ENCODE measurements at regions of chr12 and their contacts with region 1.

Region 1: DNA sequence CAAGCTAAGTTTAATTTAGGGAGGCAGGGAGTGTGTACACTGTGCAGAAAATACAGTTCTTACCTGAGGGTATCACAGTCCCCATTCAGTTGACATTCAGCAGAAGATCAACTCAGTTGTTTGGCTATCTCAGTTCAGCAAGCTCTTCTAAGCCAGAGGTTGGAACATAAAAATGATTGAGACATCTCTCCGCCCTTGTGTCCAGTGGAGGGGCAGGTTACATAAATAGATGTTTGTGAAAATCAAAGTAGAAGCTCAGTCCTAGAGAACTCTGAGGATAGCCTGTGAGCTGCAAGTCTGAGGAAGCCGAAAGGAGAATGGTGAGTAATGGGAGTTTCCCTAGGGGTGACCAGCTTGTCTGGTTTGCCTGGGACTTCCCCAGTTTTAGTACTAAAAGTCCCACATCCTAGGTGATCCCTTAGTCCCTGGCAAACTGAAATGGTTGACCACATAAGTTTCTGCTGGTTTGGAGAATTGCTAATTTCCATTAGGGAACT is 251.4 kb upstream of the ATP2B1 start:
- DNase-seq: no peak
- ATAC-seq: no peak
- H3K4me3 Mint-ChIP-seq: no peak overlapping the region
- H3K27ac Mint-ChIP-seq: no peak overlapping the region
- H3K4me1 Mint-ChIP-seq: peaks cover 8% of the 10 kb centered on the region
- H3K27me3 Mint-ChIP-seq: no peaks in the 10 kb centered on the region

Region 2: GRCh38 chr12:89949457-89950195 is 10.4 kb before region 1 on chr12:
- CTCF ChIA-PET with region 1: interaction called, 12 read pairs
- POLR2A ChIA-PET with region 1: no interaction called
- DNase-seq: peak; percentile 69
- ATAC-seq: peak; percentile 93
- H3K4me3 Mint-ChIP-seq: no peak overlapping the region
- H3K27ac Mint-ChIP-seq: peak overlapping the region; percentile 2
- H3K4me1 Mint-ChIP-seq: peaks cover 20% of the 10 kb centered on the region
- H3K27me3 Mint-ChIP-seq: no peaks in the 10 kb centered on the region